ENCODE measurements at regions of chr7 and their contacts with region 1.

Region 1: DNA sequence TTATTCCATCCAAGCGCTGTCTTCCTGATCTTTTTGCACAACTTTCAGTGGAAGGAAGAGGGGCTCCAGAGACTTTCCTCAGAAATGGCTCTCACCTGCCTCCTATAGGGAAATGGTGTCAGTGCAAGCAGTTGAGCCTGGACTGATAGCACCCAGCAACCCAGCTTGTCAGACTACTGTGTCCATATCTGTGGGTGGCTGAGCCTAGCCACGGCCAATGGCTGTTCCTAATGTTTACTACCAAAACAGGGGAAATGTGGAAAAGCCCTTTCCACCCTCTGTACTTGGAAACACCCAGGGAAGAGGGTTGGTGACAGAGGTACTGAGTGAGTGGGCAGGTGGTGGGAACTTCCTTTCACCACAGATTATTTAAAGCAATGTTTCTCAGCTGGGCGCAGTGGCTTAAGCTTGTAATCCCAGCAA is 4.3 kb upstream of the YKT6 start:
- DNase-seq: peak in 1 of 5 donors; percentile 43
- H3K4me3 ChIP-seq: no peak overlapping the region
- H3K27ac ChIP-seq: no peak overlapping the region
- H3K4me1 ChIP-seq: no peaks in the 10 kb centered on the region
- H3K27me3 ChIP-seq: no peaks in the 10 kb centered on the region
- CTCF ChIP-seq: peak in 2 of 3 donors; percentile 53 to 54
- EP300 ChIP-seq: no peak
- POLR2A ChIP-seq: no peak

Region 2: GRCh38 chr7:43856996-43857395 is 339.5 kb before region 1 on chr7:
- intact Hi-C with region 1: no loop called
- DNase-seq: no peak
- H3K4me3 ChIP-seq: no peak overlapping the region
- H3K27ac ChIP-seq: no peak overlapping the region
- H3K4me1 ChIP-seq: no peaks in the 10 kb centered on the region
- H3K27me3 ChIP-seq: no peaks in the 10 kb centered on the region
- CTCF ChIP-seq: no peak
- EP300 ChIP-seq: no peak
- POLR2A ChIP-seq: no peak

Region 3: DNA sequence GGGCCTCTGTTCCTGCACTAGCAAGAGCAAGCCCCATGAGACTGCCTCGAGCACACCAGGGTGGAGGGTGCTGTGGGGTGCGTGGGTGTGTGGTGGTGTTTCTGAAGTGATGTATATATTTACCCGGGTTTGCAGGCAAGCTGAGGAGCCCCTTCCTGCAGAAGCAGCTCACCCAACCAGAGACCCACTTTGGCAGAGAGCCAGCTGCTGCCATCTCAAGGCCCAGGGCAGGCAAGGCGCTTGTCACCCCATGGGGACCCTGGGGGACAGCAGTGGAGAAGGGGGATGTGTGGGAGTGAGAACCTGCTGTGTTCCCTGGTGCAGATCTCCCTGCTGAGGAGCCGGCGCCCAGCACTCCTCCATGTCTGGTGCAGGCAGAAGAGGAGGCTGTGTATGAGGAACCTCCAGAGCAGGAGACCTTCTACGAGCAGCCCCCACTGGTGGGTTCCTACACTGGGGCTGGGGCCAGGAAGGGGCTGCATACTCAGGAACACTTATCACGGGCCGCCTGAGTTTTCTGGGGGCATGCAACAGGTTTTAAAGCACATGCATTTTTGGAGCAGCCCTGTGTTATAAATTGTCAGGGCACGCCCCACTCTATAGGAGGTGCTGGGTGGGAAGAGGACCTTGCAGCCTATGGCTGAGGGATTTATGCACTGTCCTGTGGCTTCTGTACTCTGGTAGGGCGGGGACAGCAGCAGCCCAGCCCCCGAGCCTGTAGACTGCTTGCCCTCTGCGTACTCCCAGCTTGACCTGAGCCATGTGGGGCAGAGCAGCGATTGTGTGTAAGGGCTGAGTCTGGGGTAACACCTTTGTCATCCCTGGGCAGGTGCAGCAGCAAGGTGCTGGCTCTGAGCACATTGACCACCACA is 137.0 kb before region 1 on chr7:
- intact Hi-C with region 1: loop called in 1 of 4 experiments (anchors 10 kb)
- DNase-seq: peak in 3 of 5 donors; percentile 8 to 41 (median 36)
- H3K4me3 ChIP-seq: no peak overlapping the region
- H3K27ac ChIP-seq: no peak overlapping the region
- H3K4me1 ChIP-seq: peaks cover 3% of the 10 kb centered on the region
- H3K27me3 ChIP-seq: no peaks in the 10 kb centered on the region
- CTCF ChIP-seq: no peak
- EP300 ChIP-seq: no peak
- POLR2A ChIP-seq: no peak

Region 4: GRCh38 chr7:44072364-44073231 is 123.9 kb before region 1 on chr7:
- intact Hi-C with region 1: loop called in 2 of 4 experiments (anchors 5 kb)
- DNase-seq: peak; percentile 78 to 89 (median 84)
- H3K4me3 ChIP-seq: no peak overlapping the region
- H3K27ac ChIP-seq: peak overlapping the region in 1 of 2 donors; percentile 35
- H3K4me1 ChIP-seq: no peaks in the 10 kb centered on the region
- H3K27me3 ChIP-seq: no peaks in the 10 kb centered on the region
- CTCF ChIP-seq: peak; percentile 37 to 73 (median 56)
- EP300 ChIP-seq: no peak
- POLR2A ChIP-seq: no peak

Region 5: DNA sequence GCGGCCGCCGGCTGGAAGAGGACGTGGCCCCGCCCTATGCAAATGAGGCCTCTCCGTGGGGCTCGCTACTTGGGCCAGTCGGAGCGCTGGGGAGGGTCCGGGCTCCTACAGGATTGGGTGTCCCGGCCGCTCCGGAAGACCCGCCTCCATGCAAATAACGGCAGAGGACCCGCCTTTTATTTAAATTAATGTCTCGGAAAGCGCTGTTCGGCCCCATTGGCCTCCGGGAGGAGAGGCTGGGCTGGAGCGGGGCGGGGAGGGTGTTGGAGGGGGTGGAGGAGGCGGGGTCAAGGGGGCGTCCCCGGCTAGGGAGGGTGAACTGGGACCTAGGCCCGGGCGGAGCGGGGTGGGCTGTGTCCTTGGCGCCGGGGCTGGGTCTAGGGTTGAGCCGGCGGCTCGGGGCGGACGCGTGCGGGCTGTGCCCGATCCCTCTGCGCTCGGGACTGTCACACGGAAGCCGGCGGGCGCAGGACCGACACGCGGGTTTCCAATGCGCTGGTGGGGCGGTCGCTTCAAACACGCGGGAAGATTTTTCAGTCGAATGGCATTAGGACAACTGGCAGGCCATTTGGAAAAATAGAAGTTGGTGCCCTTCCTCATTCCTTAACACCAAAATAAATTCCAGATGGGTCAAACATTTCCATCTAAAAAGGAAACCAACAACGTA is 113.8 kb before region 1 on chr7:
- intact Hi-C with region 1: loop called in 1 of 4 experiments (anchors 5 kb)
- DNase-seq: peak; percentile 96 to 99 (median 98)
- H3K4me3 ChIP-seq: peak overlapping the region; percentile 90
- H3K27ac ChIP-seq: peak overlapping the region; percentile 73 to 74
- H3K4me1 ChIP-seq: peaks cover 15% of the 10 kb centered on the region
- H3K27me3 ChIP-seq: no peaks in the 10 kb centered on the region
- CTCF ChIP-seq: no peak
- EP300 ChIP-seq: no peak
- POLR2A ChIP-seq: peak; percentile 78

Region 6: GRCh38 chr7:44112231-44113000 is 84.0 kb before region 1 on chr7:
- intact Hi-C with region 1: no loop called
- DNase-seq: peak in 1 of 5 donors; percentile 59
- H3K4me3 ChIP-seq: no peak overlapping the region
- H3K27ac ChIP-seq: no peak overlapping the region
- H3K4me1 ChIP-seq: peaks cover 3% of the 10 kb centered on the region
- H3K27me3 ChIP-seq: no peaks in the 10 kb centered on the region
- CTCF ChIP-seq: no peak
- EP300 ChIP-seq: no peak
- POLR2A ChIP-seq: no peak

Region 7: DNA sequence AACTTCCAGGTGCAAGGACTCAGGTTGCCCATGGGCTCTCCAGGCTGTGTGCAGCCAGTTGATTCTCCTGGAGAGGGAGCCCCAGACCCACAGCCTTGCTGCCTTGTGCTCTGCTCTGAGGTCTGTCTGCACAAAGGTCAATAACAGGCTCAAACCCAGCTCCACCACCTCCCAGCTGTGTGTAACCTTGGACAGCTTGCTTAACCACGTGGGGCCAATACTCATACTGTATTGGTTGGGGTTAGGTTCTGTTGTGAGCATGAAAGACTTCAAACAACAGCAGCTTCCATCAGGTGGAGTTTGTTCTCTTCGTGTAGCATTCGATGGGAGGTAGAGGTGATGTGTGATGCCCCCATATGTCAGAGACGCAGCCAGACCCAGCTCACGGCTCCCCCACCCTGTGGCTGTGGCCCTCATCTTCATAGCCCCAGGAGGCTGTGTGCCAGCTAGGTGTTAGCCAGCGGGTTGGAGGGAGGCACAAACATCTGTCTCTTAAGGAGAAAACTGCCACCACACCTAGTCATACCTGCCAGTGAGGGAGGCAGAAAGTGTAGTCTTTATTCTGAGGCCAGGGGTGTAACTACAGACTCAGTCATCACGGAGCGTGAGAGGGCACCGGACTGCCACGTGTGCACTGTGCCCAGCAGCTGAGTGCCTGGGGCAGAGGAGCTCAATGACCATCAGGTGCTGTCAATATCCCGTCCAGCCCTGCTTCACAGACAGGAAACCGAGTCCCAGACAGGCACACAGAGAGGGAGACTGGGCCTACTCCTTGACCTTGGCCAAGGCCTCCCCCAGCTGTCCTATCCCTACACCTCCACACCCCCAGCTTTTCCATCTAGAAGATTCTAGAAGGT is 65.1 kb before region 1 on chr7:
- intact Hi-C with region 1: loop called in 1 of 4 experiments (anchors 10 kb)
- DNase-seq: no peak
- H3K4me3 ChIP-seq: no peak overlapping the region
- H3K27ac ChIP-seq: no peak overlapping the region
- H3K4me1 ChIP-seq: no peaks in the 10 kb centered on the region
- H3K27me3 ChIP-seq: no peaks in the 10 kb centered on the region
- CTCF ChIP-seq: no peak
- EP300 ChIP-seq: no peak
- POLR2A ChIP-seq: no peak